ENCODE measurements at regions of chr10 and their contacts with region 1.

Region 1: DNA sequence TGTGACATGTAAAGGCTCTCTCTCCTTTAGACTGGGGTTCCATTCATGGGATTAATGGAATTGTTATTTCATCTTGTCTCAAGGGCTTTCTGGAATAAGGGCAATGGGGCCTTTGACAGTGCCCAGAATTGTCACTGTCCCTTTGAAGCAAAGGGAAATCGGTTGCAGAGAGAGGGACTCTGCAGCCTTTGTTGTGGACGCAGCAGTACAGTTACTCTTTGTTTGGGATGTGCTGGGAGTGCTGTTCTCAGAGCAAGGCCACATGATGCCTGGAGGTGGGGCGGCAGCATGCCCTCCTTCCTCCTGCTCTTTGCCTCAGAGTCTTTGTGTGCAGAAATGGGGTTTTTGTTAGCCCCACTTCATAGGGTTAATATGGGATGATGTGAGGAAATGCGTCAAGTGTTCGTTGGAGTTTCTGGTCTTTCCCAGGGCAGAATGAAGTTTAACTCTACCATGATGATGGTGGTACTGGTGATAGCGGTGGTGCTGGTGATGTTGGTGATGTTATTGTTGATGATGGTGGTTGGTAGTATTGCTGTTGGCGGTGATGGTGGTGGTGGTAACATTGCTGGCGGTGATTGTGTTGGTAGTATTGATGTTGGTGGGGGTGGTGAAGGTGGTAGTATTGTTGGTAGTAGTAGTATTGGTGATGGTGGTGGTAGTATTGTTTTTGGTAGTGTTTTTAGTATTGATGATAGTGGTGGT is 45.3 kb downstream of the DOCK1 start:
- DNase-seq: peak in 9 of 10 donors; percentile 63 to 90 (median 86)
- H3K4me3 ChIP-seq: peak overlapping the region in 2 of 59 donors; percentile 16 to 37
- H3K27ac ChIP-seq: peak overlapping the region; percentile 2 to 98 (median 90)
- H3K27me3 ChIP-seq: no peaks in the 10 kb centered on the region
- CTCF ChIP-seq: peak in 12 of 56 donors; percentile 3 to 43 (median 19)

Region 2: DNA sequence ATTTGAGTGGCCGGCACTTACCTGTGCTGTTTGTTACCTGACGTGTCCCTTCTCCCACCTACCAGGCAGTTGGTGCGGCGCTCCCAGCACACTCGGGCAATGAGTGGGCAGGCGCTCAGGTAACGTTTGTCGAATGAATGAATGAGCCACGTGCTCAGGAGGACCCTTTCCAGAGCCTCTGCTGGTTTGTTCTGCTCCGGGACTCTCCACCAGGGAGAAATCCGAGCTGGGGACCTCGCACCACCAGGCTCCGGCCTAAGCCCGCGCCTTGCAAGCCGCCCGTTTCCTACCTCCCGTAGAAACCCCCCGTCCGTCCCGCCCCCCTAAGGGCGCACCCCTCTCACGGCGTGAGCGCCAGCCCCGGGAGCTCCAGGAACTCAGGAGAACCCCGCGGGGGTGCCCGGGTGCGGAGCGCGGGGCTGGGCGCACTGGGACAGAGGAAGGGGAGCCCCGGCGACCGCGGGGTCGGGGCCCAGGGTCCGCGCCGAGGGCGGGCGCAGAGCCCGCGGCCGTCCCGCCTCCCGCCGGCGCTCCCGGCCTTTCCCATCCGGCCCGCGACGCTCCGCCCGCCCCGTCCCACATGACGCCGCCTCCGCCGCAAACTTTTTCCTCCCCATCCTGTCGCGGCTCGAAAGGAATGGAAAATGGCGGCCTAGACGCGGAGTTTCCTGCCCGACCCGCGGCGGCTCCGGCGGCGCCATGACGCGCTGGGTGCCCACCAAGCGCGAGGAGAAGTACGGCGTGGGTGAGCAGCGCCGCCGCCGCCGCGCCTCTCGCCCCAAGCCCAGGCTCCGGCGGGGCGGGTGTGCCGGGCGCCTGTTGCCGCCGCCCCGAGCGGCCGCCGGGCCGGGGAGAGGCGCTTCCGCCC is 45.5 kb before region 1 on chr10 and contains the start of gene DOCK1:
- intact Hi-C with region 1: loop called (anchors 5 kb)
- DNase-seq: peak in 4 of 10 donors; percentile 30 to 68 (median 52)
- H3K4me3 ChIP-seq: peak within 1 kb of the TSS; percentile 48 to 82 (median 71)
- H3K27ac ChIP-seq: peak within 1 kb of the TSS in 55 of 59 donors; percentile 29 to 90 (median 81)
- H3K27me3 ChIP-seq: peaks cover 0 to 36% (median 0%) of the 10 kb centered on the region in 45 donors
- CTCF ChIP-seq: peak in 3 of 56 donors; percentile 5 to 19 (median 12)
- total RNA-seq, gene DOCK1: 31.7 to 148 (median 56.3) TPM

Measured in dorsolateral prefrontal cortex (tissue), 120 donors.